GM10248 (cell line): ENCODE measurements at regions of chr4 and their contacts with region 1.

Region 1: DNA sequence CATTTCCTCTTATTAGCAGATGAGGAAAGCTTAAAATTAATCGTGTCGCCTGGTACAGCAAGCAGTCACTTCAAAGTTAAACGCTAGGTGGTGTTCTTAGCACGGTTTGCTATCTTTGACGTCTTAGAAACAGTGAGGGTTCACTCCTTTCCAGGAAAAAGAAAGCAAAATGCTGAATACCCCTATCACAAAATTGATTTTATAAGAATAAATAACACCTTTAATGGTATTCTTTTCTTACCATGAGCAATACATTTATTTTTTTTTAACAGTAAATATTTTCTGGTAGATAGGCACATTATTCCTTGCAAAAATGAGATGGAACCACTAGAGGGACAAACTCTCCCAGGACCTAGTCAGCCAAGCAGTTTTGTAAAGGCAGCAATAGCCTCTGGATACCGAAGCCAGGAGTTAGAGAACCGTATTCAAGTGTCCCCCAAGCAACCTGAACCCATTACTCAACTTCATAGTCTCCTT is 153.9 kb downstream of the KDR start:
- DNase-seq: peak; percentile 15
- CTCF ChIP-seq: peak; percentile 60

Region 2: DNA sequence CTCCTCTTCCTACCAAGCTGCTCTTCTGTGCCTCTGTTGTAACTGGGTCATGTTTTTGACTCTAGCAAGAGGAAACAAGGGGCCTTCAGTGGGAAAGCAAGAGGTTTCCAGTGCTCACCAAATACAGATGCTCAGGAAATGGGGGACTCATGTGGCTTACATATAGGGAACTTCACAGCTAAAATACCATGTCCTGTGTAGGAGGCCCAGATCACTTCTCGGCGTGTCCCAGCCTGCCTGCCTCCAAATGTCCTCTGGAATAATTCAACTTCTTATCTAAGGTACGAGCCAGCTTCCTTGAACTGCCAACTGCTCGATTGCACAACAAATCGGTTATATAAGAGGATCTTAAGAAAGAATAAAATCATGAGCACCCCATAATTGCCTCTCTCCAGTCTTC is 152.5 kb before region 1 on chr4:
- CTCF ChIA-PET with region 1: no interaction called
- POLR2A ChIA-PET with region 1: no interaction called
- DNase-seq: no peak
- CTCF ChIP-seq: no peak

Region 3: GRCh38 chr4:54855191-54855854 is 116.2 kb before region 1 on chr4:
- CTCF ChIA-PET with region 1: no interaction called
- POLR2A ChIA-PET with region 1: no interaction called
- DNase-seq: no peak
- CTCF ChIP-seq: no peak

Region 4: GRCh38 chr4:54961357-54961975 is 10.0 kb before region 1 on chr4:
- CTCF ChIA-PET with region 1: interaction called, 10 read pairs
- POLR2A ChIA-PET with region 1: no interaction called
- DNase-seq: no peak
- CTCF ChIP-seq: peak; percentile 39

Region 5: DNA sequence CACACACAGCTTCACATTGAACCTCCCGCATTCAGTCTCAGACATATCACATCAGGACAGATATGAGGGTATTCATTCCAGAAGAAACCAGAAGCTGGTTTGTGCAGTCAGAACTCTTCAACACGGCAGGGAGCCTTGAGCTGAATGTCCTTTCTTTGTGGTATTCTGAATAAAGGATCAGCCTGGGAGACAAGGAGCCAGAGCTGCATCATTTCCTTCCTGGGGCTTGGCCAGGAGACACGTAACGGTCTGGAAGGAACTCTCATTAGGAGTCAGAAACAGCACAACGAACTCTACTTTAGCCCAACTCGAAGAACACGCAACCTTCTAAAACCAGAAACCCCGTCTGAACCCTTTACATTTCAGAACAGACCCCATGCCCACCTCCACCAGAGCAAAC is 107.5 kb after region 1 on chr4:
- CTCF ChIA-PET with region 1: no interaction called
- POLR2A ChIA-PET with region 1: no interaction called
- DNase-seq: no peak
- CTCF ChIP-seq: no peak

Region 6: DNA sequence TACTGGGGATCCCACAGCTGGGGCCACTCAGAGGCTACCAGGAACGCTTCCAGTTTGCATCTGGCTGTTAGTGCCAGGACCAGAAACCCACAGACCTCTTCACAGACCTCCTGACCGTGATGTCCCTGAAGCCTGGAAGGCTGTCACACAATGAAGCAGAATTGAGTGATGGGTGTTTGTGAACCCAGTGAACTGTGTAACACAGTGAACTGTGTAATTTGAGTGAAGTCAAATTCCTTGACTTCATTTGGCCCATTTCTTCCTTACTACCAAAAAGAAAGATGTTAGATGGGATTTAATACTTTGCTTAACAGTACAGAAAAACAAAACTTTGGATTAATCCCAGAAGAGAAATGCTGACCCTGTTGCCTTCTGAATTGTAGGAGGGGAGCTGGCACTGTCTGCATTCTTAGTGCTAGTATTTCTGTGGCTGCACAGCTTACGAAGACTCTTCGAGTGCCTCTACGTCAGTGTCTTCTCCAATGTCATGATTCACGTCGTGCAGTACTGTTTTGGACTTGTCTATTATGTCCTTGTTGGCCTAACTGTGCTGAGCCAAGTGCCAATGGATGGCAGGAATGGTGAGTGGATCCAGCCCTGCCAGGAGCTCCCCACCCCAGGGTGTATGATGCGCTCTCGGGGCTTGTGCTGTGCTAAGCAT is 392.3 kb after region 1 on chr4:
- CTCF ChIA-PET with region 1: no interaction called
- POLR2A ChIA-PET with region 1: no interaction called
- DNase-seq: no peak
- CTCF ChIP-seq: no peak